Activated naive CD4-positive, alpha-beta T cell treated with anti-CD3 and anti-CD28 coated beads for 36 hours (primary cell): ENCODE measurements at regions of chr4 and their contacts with region 1.

Region 1: GRCh38 chr4:40199999-40200874 is 3.4 kb downstream of the RHOH start:
- DNase-seq: peak; percentile 88
- H3K4me3 Mint-ChIP-seq: peak overlapping the region; percentile 85
- H3K27ac Mint-ChIP-seq: peak overlapping the region; percentile 98
- H3K4me1 Mint-ChIP-seq: peaks cover 31% of the 10 kb centered on the region
- H3K27me3 Mint-ChIP-seq: no peaks in the 10 kb centered on the region

Region 2: GRCh38 chr4:38319456-38320342 is 1880.5 kb before region 1 on chr4:
- CTCF ChIA-PET with region 1: no interaction called
- intact Hi-C with region 1: loop called (anchors 10 kb)
- DNase-seq: peak; percentile 98
- H3K4me3 Mint-ChIP-seq: peak overlapping the region; percentile 76
- H3K27ac Mint-ChIP-seq: peak overlapping the region; percentile 89
- H3K4me1 Mint-ChIP-seq: peaks cover 46% of the 10 kb centered on the region
- H3K27me3 Mint-ChIP-seq: no peaks in the 10 kb centered on the region

Region 3: DNA sequence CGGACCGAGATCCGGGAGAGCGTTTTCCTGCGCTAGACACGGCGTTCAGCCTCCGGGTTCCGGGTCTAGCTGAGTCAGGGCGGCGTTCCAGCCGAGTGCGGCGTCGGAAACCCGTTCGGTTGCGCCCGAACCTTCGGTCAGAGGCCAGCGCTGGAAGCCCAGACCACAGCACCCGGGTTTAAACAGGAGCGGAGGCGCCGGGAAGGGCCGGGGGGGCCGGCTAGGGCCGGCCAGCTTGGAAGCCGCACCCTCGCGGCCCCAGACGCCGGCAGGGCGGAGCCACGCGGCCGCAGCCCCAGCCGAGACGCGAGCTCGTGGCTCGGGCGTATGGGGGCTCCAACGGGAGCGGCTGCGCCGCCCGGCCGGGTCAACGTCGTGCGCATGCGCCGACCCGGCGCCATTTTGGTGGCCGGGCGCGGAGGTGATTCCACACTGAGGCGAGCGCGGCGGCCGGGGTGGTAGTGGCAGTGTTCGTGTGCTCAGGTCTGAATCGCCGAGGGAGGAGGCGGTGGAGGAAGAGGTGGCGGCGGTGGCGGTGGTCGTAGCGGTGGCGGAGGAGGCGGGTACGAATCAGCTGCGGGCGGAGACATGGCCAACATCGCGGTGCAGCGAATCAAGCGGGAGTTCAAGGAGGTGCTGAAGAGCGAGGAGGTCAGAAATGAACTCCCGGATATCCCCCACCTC is 502.4 kb before region 1 on chr4 and contains the start of gene UBE2K:
- CTCF ChIA-PET with region 1: no interaction called
- intact Hi-C with region 1: loop called (anchors 5 kb)
- DNase-seq: peak; percentile 85
- H3K4me3 Mint-ChIP-seq: peak within 1 kb of the TSS; percentile 98
- H3K27ac Mint-ChIP-seq: peak within 1 kb of the TSS; percentile 98
- H3K4me1 Mint-ChIP-seq: peaks cover 32% of the 10 kb centered on the region
- H3K27me3 Mint-ChIP-seq: no peaks in the 10 kb centered on the region
- total RNA-seq, gene UBE2K: 60.6 to 69.5 TPM

Region 4: GRCh38 chr4:40149960-40150385 is 50.3 kb before region 1 on chr4:
- CTCF ChIA-PET with region 1: interaction called, 18 read pairs
- intact Hi-C with region 1: loop called (anchors 1 kb)
- DNase-seq: peak; percentile 86
- H3K4me3 Mint-ChIP-seq: no peak overlapping the region
- H3K27ac Mint-ChIP-seq: peak overlapping the region; percentile 70
- H3K4me1 Mint-ChIP-seq: peaks cover 36% of the 10 kb centered on the region
- H3K27me3 Mint-ChIP-seq: no peaks in the 10 kb centered on the region

Region 5: GRCh38 chr4:40238700-40239548 is 38.7 kb after region 1 on chr4:
- CTCF ChIA-PET with region 1: interaction called, 5 read pairs
- intact Hi-C with region 1: loop called (anchors 2 kb)
- DNase-seq: peak; percentile 90
- H3K4me3 Mint-ChIP-seq: peak overlapping the region; percentile 74
- H3K27ac Mint-ChIP-seq: peak overlapping the region; percentile 89
- H3K4me1 Mint-ChIP-seq: peaks cover 91% of the 10 kb centered on the region
- H3K27me3 Mint-ChIP-seq: no peaks in the 10 kb centered on the region

Region 6: DNA sequence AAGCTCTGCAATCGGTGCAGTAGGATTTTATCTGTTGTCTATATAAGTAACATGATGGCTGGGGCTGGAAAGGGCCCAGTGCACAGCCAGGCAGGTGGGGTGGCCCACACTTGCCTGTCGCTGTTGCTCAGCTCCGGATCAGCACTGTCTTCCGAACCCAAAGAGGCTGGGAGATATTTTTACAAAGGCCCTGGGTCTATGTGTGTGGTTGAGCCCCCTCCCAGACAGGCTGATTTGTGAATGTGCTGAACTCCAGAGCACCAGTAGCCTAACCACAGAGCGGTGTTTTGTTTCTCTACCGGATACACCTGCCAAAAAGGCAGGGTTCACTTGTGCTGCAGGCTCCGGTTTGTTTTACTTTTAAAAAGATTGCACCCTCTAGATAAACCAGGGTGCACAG is 101.4 kb after region 1 on chr4:
- CTCF ChIA-PET with region 1: interaction called, 4 read pairs
- intact Hi-C with region 1: loop called (anchors 1 kb)
- DNase-seq: peak; percentile 73
- H3K4me3 Mint-ChIP-seq: peak overlapping the region; percentile 57
- H3K27ac Mint-ChIP-seq: peak overlapping the region; percentile 88
- H3K4me1 Mint-ChIP-seq: peaks cover 84% of the 10 kb centered on the region
- H3K27me3 Mint-ChIP-seq: no peaks in the 10 kb centered on the region

Region 7: DNA sequence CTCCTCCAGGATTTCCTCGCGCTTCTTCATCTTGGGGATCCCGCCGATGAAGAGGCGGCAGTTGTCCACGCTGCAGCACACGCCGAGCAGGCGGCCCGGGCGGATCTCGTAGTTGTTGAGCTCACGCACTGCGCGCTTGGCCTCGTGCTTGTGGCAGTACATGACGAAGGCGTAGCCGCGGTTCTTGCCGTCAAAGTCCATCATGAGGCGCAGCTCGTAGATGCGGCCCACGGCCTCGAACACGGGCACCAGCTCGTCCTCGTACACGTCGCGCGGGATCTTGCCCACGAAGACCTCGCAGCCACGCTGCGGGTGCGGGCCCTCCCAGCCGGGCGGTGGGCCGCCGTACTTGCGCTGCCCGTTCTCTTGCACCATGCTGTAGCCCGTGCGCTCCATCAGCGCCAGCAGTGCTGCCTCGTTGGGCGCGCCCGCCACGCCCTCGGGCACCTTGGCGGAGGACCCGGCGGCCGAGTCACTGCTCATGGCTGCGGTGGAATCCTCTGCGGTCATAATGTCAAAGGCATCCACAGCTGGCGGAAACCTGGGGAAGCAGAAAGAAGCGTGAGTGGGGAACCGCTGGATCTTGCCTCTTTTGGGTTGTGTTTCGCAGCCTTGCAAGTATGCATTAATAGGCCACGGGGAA is 238.3 kb after region 1 on chr4:
- CTCF ChIA-PET with region 1: no interaction called
- intact Hi-C with region 1: loop called (anchors 10 kb)
- DNase-seq: no peak
- H3K4me3 Mint-ChIP-seq: no peak overlapping the region
- H3K27ac Mint-ChIP-seq: no peak overlapping the region
- H3K4me1 Mint-ChIP-seq: peaks cover 36% of the 10 kb centered on the region
- H3K27me3 Mint-ChIP-seq: no peaks in the 10 kb centered on the region

Region 8: GRCh38 chr4:40515398-40516293 is 315.4 kb after region 1 on chr4:
- CTCF ChIA-PET with region 1: no interaction called
- intact Hi-C with region 1: no loop called
- DNase-seq: peak; percentile 16
- H3K4me3 Mint-ChIP-seq: no peak overlapping the region
- H3K27ac Mint-ChIP-seq: no peak overlapping the region
- H3K4me1 Mint-ChIP-seq: peaks cover 16% of the 10 kb centered on the region
- H3K27me3 Mint-ChIP-seq: no peaks in the 10 kb centered on the region